Colonic mucosa (tissue), 4 donors: ENCODE measurements at regions of chr18 and their contacts with region 1.

Region 1: GRCh38 chr18:49555641-49556040 is 6.2 kb upstream of the LIPG start:
- DNase-seq: no peak
- H3K4me3 ChIP-seq: no peak overlapping the region
- H3K27ac ChIP-seq: no peak overlapping the region
- H3K4me1 ChIP-seq: no peaks in the 10 kb centered on the region
- H3K27me3 ChIP-seq: no peaks in the 10 kb centered on the region
- CTCF ChIP-seq: no peak

Region 2: GRCh38 chr18:49335677-49336076 is 220.0 kb before region 1 on chr18:
- intact Hi-C with region 1: no loop called
- DNase-seq: no peak
- H3K4me3 ChIP-seq: no peak overlapping the region
- H3K27ac ChIP-seq: no peak overlapping the region
- H3K4me1 ChIP-seq: no peaks in the 10 kb centered on the region
- H3K27me3 ChIP-seq: no peaks in the 10 kb centered on the region
- CTCF ChIP-seq: no peak

Region 3: DNA sequence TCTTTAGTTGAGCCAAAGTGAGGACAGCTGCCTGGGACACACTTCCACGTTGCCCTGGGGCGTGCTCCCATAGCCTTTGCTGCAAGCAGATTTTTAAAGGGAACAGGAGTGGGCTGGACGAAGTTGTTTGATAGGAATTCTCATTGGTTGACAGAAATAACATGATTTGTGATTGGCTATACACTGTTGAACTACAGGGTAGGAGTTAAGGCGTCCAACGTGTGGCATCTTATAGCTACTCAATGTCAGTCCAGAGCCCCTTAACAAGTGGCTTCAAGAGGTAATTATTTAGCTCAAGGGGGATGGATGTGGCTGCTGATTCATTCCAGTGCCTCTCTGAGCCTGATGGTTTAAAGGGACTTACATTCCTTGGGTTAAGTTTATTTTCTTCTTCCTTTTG is 192.2 kb after region 1 on chr18:
- intact Hi-C with region 1: no loop called
- DNase-seq: no peak
- H3K4me3 ChIP-seq: no peak overlapping the region
- H3K27ac ChIP-seq: no peak overlapping the region
- H3K4me1 ChIP-seq: no peaks in the 10 kb centered on the region
- H3K27me3 ChIP-seq: no peaks in the 10 kb centered on the region
- CTCF ChIP-seq: no peak

Region 4: GRCh38 chr18:49768051-49768391 is 212.4 kb after region 1 on chr18:
- intact Hi-C with region 1: loop called (anchors 5 kb)
- DNase-seq: peak; percentile 70
- H3K4me3 ChIP-seq: no peak overlapping the region
- H3K27ac ChIP-seq: no peak overlapping the region
- H3K4me1 ChIP-seq: no peaks in the 10 kb centered on the region
- H3K27me3 ChIP-seq: no peaks in the 10 kb centered on the region
- CTCF ChIP-seq: peak; percentile 55

Region 5: GRCh38 chr18:49784427-49785185 is 229.0 kb after region 1 on chr18:
- intact Hi-C with region 1: loop called (anchors 5 kb)
- DNase-seq: no peak
- H3K4me3 ChIP-seq: no peak overlapping the region
- H3K27ac ChIP-seq: no peak overlapping the region
- H3K4me1 ChIP-seq: peaks cover 6% of the 10 kb centered on the region
- H3K27me3 ChIP-seq: no peaks in the 10 kb centered on the region
- CTCF ChIP-seq: no peak